ENCODE measurements at regions of chr6 and their contacts with region 1.

Region 1: GRCh38 chr6:43723737-43724295 is 36.2 kb upstream of the MRPS18A start:
- DNase-seq: no peak
- H3K4me3 ChIP-seq: no peak overlapping the region
- CTCF ChIP-seq: peak; percentile 65

Region 2: GRCh38 chr6:43746613-43747102 is 22.8 kb after region 1 on chr6:
- CTCF ChIA-PET with region 1: interaction called, 18 read pairs
- POLR2A ChIA-PET with region 1: no interaction called
- DNase-seq: no peak
- H3K4me3 ChIP-seq: no peak overlapping the region
- CTCF ChIP-seq: no peak

Region 3: DNA sequence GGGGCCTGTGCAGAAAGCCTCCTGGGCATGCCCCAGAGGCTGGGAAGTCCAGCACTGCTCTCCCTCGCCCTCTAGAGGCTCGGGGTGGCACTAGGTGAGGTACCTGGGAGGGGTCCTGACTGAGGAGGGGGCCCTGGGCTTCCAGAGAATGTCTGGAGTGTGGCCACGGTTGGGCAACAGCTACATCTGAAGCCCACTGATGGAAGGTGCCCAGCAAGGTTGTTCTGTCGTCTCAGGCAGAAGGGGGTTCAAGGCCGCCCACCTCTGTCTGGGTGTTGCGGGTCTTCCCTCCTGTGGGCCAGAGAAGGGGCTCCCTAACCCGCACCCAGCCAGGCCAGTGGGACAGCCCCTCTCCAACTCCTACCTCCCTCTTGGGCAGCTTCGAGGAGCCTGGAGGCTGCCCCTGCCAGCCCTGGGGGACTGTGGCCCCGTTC is 34.8 kb after region 1 on chr6:
- CTCF ChIA-PET with region 1: interaction called, 14 read pairs
- POLR2A ChIA-PET with region 1: no interaction called
- DNase-seq: no peak
- H3K4me3 ChIP-seq: no peak overlapping the region
- CTCF ChIP-seq: peak; percentile 65

Region 4: DNA sequence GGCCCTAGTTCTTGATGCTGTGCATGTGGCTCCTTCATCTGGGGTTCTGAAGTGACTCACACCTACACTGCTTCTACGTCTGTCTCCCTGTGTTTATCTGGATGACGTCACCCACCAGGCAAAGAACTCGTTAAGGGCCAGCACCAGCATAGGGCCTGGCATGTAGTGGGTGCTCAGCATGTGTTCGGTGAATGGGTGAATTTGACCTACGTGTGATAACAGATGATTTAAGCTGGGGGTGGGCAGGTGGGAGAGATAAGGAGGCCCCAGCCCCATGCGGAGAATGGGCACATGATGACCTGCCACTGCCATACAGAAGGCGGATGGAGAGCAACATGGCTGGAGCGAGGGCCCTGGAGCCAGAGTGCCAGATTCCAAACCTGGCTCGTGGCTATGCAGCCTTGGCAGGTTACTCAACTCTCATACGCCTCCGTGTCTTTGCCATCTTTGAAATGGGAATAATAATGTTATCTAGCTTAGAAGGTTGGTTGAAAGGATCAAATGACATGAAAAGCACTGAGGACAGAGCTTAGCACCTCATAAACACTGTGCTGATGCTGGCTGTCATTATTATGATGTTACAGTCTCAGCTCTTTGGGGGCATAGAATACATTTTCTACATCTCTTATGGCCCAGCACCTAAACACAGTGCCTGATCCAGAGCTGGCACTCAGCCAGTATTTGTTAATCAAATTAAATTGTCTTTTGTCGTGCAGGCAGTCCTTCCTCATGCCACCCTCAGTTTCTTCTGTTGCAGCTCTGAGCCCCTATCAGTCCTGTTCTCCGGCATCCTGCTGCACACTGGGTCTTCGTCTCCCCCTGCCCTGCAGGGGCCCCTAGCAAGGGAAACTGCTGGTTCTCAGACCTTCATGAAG is 85.8 kb after region 1 on chr6:
- CTCF ChIA-PET with region 1: no interaction called
- POLR2A ChIA-PET with region 1: no interaction called
- DNase-seq: no peak
- H3K4me3 ChIP-seq: no peak overlapping the region
- CTCF ChIP-seq: no peak